ENCODE measurements at regions of chr21 and their contacts with region 1.

Region 1: GRCh38 chr21:46323227-46324128 is at the start of gene C21orf58:
- DNase-seq: peak; percentile 97 to 98
- H3K4me3 ChIP-seq: peak within 1 kb of the TSS; percentile 69 to 98 (median 70)
- H3K27ac ChIP-seq: peak within 1 kb of the TSS; percentile 68 to 97 (median 72)
- H3K4me1 ChIP-seq: peaks cover 9 to 23% of the 10 kb centered on the region in 2 donors
- H3K27me3 ChIP-seq: no peaks in the 10 kb centered on the region
- CTCF ChIP-seq: no peak
- POLR2A ChIP-seq: peak in 1 of 2 donors; percentile 5
- total RNA-seq, gene C21orf58: 0.89 to 2.2 (median 1.7) TPM

Region 2: DNA sequence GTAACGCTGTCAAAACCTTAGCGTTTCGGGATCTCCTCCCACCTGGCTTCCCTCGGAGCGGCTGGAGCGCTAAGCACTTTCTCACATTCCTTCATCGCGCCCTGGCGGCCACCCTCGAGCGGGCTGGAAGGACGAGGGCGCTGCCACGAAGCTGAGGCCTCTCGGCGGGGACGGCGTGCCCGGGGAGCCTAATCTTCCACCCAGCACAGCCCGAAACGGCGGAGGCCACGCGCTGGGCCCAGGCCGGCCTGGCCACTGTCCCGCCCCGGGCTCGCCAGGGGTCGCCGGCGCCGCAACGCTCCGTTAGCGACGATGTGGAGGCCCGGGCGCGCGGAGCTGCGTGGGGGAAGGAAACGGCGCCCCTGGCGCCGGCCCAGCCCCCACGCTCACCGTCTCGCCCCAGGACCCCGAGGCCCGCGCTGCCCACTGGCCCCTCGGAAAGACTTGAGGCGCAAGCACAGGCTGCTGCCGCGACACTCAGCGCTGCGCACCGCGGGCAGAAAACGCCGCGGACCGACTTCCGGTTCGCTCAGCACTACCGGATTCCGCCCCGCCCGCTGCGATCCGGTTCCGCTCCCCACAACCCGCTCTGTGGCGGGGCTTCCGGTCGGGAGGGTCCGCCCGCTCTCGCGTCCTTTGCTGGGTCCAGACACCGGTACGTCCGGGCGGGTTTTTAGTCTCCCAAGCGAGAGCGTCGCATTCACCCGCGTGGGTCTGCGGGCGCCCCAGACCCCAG is 37.5 kb before region 1 on chr21 and contains the start of gene YBEY:
- intact Hi-C with region 1: loop called (anchors 5 kb)
- DNase-seq: peak; percentile 90 to 92
- H3K4me3 ChIP-seq: peak within 1 kb of the TSS; percentile 79 to 91 (median 81)
- H3K27ac ChIP-seq: peak within 1 kb of the TSS; percentile 86 to 93 (median 92)
- H3K4me1 ChIP-seq: peaks cover 33 to 41% of the 10 kb centered on the region in 2 donors
- H3K27me3 ChIP-seq: no peaks in the 10 kb centered on the region
- CTCF ChIP-seq: peak in 4 of 6 experiments; percentile 18 to 37 (median 31)
- POLR2A ChIP-seq: peak in 1 of 2 donors; percentile 75
- total RNA-seq, gene YBEY: 12.6 to 25.4 (median 21.0) TPM